AG04449 (cell line): ENCODE measurements at regions of chr20 and their contacts with region 1.

Region 1: DNA sequence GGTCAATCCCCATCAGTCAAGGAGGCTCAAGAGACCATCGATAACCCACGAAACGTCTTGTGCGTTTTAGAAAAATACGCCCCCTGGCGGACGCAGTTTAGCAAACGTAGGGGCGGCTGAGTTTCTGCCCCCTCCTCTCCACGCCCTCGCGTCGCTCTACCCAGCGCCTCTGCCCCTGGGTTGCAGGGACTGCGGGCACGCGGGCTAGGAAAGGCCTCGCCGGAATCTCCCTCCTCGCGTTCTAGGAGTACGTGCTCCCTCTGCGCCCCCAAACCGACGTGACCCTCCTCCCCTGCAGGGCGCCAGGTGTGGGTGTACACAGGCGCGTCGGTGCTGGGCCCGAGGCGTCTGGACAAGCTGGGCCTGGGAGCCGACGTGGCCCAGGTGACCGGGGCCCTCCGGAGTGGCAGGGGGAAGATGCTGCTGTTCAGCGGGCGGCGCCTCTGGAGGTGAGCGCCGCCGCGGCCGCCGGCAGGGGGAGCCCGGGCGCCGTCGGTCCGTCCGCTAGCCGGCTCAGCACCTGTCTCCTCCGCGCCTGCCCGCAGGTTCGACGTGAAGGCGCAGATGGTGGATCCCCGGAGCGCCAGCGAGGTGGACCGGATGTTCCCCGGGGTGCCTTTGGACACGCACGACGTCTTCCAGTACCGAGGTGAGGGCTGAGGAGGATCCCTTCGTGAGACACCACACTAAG is 5.3 kb downstream of the MMP9 start:
- DNase-seq: no peak
- H3K4me3 ChIP-seq: no peak overlapping the region
- CTCF ChIP-seq: peak; percentile 44

Region 2: GRCh38 chr20:45987108-45987780 is 26.7 kb before region 1 on chr20:
- CTCF ChIA-PET with region 1: interaction called, 51 read pairs
- POLR2A ChIA-PET with region 1: no interaction called
- DNase-seq: no peak
- H3K4me3 ChIP-seq: no peak overlapping the region
- CTCF ChIP-seq: peak; percentile 93

Region 3: GRCh38 chr20:46057856-46058598 is 44.1 kb after region 1 on chr20:
- CTCF ChIA-PET with region 1: interaction called, 11 read pairs
- POLR2A ChIA-PET with region 1: no interaction called
- DNase-seq: no peak
- H3K4me3 ChIP-seq: peak overlapping the region; percentile 48
- CTCF ChIP-seq: peak; percentile 46

Region 4: DNA sequence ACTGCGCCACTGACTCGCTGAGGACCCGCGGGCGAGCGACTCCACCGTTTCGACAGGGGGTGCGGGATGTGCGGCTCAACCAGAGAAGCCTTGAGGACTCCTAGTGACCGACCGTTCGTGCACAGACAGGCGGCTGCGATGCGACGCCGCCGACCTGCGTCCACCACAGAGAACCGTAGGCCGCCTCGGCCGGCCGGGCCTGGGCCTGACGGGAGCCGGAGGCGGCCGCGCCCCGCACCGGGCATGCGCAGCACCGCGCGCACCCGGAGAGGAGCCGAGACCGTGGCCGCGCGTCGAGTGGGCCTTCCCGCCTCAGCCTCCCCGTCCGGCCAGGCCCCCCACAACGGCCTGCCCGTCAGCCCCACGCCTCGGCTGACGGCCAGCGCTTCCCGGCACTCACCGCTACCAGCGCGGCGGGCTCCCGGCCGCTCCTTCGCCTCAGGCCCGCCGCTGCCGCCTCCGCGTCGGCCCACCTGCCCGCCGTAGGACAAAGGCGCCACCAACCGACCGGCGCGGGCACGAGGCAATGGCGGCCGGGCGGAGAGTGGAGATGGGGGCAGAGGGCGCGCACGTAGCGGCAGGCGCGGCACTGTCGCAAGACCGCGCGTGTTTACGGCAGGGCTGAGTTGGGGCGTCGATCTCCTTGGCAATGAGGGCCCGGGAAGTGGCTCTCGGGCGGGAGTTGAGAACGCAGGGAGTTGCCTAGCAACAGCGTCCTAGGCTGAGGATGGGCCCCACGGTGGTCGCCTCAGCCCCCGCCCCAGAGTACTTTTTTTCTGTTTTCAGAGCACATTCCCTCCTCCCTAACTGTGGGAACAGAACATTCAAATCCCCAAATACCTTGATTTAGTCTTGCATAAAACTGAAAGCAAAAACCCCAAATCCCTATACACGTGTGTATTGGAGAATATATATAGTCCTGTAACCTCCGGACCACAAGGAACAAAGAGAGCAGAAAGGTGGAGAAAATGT is 75.7 kb after region 1 on chr20 and contains the start of gene NCOA5:
- CTCF ChIA-PET with region 1: interaction called, 17 read pairs
- POLR2A ChIA-PET with region 1: no interaction called
- DNase-seq: peak; percentile 78
- H3K4me3 ChIP-seq: peak within 1 kb of the TSS; percentile 92
- CTCF ChIP-seq: peak; percentile 35

Region 5: DNA sequence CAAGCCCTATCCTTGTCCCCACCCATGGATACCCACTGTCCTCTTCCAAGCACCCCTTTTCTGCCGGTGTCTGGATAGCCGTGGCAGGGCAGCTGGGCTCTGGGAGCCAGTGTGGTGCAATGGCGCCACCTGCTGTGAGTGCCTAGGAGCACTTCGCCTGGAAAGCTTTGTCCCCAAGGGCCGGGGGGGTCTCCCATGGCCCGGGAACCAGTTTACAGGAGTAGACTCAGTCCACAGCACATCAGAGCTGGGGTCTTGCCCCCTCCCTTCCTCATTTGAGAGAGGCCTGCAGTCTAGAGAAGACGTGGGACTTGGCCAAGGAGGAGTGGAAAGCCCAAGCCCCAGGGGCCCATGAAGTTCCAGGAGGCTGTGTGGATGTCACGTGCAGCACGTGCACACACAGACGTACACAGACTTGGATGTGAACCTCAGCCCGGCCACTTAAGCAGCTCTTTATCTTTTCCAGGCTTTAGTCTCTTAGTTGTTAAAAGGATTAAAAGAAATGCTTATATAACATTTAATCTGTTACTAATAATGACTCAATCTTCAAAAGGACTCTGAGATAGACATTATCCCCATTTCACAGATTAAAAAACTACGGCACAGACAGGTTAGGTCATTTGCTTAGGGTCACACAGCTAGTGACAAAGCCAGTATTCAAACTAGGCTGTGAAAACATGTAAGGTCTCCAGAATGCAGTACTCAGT is 335.2 kb after region 1 on chr20:
- CTCF ChIA-PET with region 1: interaction called, 14 read pairs
- POLR2A ChIA-PET with region 1: no interaction called
- DNase-seq: no peak
- H3K4me3 ChIP-seq: no peak overlapping the region
- CTCF ChIP-seq: peak; percentile 73